GM10248 (cell line): ENCODE measurements at regions of chr3 and their contacts with region 1.

Region 1: DNA sequence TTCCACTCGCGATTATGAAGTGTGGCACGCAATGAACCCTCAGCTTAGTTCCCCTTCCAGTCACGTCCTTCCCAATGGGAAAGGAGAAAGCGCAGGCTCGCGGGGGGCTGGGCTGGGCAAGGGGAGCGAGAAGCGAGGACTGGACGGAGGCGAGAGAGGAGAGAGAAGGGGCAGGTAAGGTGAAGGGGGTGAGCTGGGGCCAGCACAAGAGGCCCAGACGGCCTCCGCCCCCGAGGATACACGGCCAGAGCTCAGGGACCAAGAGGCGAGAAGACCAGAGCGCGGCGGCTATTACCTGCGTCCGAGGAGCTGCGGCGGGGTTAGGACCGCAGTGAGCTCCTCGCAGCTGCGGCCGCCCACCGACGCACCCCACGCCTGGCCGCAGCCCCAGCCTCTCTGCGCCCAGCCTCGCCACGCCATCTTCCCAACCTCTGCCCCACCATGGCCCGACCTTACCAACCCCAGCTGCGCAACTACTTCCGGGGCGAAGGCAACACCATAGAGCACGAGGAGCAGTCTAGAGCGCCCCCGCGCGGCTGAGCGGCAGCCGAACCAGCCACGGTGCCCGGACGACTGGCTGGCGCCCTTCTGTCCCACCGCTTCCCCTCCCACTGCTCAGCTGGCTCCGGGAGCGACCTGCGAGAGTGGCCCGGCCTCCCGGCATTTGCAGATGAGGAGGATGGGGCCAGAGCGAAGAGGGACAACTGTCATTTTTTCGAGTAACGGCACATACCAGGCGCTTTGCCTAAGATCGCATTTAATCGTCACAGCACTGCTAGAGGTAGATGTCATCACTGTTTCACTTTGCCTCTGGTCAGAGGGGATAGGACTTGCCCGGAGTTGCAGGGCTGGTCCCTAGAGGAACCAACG is at the start of gene PARL:
- DNase-seq: peak; percentile 94
- CTCF ChIP-seq: peak; percentile 97

Region 2: DNA sequence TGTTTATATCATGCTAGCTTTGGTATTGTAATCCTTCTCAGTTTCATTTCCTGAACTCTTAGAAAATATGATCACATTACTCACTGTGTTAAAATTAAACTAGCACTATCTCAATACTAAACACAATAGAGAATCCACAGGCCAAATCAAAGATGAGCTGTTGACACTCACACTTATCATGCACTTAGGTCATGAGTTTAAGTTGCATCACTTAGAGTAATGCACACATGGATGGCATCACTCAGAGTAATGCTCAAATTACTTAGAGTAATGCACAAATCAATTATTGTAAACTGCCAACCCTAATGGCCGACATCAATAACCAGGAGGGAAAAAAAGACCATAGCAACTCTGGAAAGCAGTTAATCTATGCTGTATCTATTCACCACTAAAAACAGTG is 416.2 kb before region 1 on chr3:
- CTCF ChIA-PET with region 1: interaction called, 10 read pairs
- POLR2A ChIA-PET with region 1: no interaction called
- DNase-seq: no peak
- CTCF ChIP-seq: no peak

Region 3: DNA sequence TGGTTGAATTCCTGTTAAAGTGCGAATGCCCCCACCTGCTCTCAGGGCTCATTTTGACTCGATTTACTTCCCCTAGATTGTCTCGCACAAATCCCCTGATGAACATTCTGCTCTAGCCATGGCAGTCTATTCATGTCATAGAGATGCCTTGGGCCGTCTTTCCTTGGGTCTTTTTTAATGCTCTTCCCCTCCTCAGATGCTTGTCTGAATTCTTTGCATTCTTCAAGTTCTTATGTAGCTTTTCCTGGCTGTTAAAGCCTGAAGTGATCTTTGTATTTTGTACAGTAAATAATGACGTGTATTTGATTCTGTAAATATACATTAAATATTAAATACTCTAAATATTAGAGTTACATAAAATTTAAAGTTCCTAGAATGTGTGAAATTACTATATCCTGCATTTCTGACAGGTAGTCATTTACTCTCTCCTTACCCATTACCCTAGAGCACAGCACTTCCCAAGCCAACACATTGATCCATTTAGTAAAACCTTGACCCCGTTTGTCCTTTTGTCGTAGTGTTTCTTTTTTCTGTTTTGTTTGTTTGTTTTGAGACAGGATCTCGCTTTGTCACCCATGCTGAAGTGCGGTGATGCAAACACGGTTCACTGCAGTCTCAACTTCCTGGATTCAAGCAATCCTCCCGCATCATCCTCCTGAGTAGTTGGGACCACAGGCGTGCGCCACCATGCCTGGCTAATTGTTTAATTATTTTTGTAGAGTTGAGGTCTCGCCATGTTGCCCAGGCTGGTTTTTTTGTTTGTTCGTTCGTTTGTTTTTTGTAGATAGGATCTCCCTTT is 139.2 kb before region 1 on chr3:
- CTCF ChIA-PET with region 1: no interaction called
- POLR2A ChIA-PET with region 1: no interaction called
- DNase-seq: no peak
- CTCF ChIP-seq: no peak

Region 4: DNA sequence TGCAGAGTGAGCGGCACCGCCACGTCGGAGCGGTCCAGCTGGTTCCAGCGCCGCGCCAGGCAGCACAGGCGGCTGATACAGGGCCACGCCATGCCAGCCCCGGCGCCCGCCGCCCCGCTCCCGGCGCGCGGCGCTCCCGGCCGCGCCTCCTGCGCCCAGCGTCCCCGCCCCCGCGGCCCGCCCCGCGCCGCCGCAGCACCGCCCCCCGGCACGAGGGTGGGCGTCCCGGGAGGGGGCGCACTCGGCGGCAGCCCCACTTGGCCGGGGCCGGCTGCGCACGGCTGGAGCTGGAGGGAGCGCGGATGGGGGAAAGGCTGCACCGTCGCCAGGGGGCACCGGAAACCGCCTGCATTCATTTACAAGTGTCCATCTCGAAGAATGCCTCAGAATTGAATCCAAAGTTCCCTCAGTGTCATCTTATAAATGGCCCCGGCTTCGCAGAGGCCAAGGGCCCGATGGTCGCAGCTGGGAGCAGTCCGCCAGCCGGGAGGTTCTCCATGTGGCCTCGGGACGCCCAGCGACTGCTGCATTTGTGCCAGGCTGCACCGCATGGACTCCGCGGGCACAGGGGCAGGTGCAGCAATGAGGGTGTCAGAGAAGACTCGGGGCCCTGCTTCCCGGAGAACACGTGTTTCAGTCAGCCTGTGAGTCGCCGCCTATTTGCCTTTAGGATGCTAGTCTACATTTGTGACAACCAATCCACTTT is 59.1 kb before region 1 on chr3 and contains the start of gene MAP6D1:
- CTCF ChIA-PET with region 1: interaction called, 11 read pairs
- POLR2A ChIA-PET with region 1: no interaction called
- DNase-seq: peak; percentile 73
- CTCF ChIP-seq: peak; percentile 29

Region 5: GRCh38 chr3:183868796-183869195 is 15.9 kb before region 1 on chr3:
- CTCF ChIA-PET with region 1: interaction called, 42 read pairs
- POLR2A ChIA-PET with region 1: no interaction called
- DNase-seq: no peak
- CTCF ChIP-seq: no peak

Region 6: GRCh38 chr3:184017672-184018423 is 133.2 kb after region 1 on chr3 and contains the start of gene ABCC5:
- CTCF ChIA-PET with region 1: interaction called, 11 read pairs
- POLR2A ChIA-PET with region 1: no interaction called
- DNase-seq: peak; percentile 94
- CTCF ChIP-seq: no peak